Heart left ventricle (tissue), 16 donors: ENCODE measurements at regions of chr3 and their contacts with region 1.

Region 1: DNA sequence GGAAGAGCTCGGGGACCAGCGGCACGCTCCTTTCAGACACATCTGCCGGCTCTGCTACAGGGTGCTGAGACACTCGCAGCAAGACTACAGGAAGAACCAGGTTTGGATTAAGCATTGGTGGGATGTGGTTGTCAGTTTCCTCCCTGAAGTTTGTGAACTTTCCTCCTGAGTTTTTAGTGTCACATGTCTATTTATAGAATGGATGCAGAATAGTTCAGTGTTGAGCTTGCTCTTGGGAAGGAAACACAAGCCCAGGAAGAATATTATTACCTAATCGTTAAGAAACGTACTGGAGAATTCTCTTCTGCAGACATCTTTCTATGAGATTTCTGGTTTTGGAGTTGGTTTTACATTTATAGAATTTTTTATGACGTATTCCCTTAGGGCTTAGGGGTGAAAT is 172.0 kb downstream of the ITPR1 start:
- DNase-seq: no peak
- ATAC-seq: peak in 2 of 4 donors; percentile 41 to 55
- H3K4me3 ChIP-seq: no peak overlapping the region
- H3K27ac ChIP-seq: no peak overlapping the region
- H3K4me1 ChIP-seq: peaks cover 0 to 19% (median 10%) of the 10 kb centered on the region in 12 donors
- H3K27me3 ChIP-seq: no peaks in the 10 kb centered on the region
- CTCF ChIP-seq: no peak
- POLR2A ChIP-seq: no peak

Region 2: DNA sequence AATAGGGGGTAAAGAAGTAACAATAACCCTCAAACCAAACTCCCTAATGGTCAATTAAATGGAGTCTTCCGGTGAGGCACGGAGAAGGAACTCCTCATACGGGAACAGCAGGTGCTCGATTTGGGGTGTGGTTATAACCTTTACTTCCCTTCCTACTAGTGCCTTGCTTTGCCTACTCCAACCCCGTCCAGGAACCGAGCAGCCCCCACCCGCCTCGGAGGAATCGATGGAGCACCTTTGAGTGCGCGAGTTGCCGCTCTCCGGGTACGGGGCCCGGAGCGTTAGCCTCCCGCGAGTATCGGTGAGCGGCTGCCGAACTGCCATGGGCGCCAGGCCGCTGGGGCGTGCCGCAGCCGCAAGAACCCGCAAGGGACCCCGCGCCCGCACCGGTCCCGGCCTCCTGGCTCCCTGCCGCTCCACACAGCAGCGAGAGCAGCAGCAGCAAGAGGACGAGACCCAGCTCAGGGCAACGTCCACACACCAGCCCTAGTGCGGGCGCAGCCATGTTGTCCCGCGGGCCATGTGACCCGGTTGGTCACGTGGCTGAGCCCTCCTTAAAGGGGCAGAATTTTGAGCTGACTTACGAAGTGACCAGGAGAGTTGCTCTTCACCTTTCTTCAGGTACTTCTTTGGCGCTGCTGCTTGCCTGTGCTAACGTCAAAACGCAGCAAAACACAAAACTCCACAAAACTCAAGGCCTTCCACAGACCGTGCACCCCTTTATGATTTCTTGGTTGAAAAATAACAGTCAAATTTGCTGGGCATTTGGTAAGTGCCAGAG is 198.3 kb before region 1 on chr3 and contains the start of gene SUMF1:
- intact Hi-C with region 1: no loop called
- DNase-seq: peak; percentile 77 to 87 (median 81)
- ATAC-seq: peak; percentile 97 to 99 (median 99)
- H3K4me3 ChIP-seq: peak within 1 kb of the TSS; percentile 71 to 97 (median 88)
- H3K27ac ChIP-seq: peak within 1 kb of the TSS in 11 of 12 donors; percentile 53 to 90 (median 80)
- H3K4me1 ChIP-seq: peaks cover 0 to 23% (median 13%) of the 10 kb centered on the region in 12 donors
- H3K27me3 ChIP-seq: no peaks in the 10 kb centered on the region
- CTCF ChIP-seq: no peak
- POLR2A ChIP-seq: peak in 1 of 2 donors; percentile 53
- total RNA-seq, gene SUMF1: 5.8 to 21.1 (median 11.2) TPM

Region 3: GRCh38 chr3:4508048-4508981 is 156.9 kb before region 1 on chr3:
- intact Hi-C with region 1: no loop called
- DNase-seq: no peak
- ATAC-seq: no peak
- H3K4me3 ChIP-seq: no peak overlapping the region
- H3K27ac ChIP-seq: peak overlapping the region in 1 of 12 donors; percentile 39
- H3K4me1 ChIP-seq: peaks cover 0 to 64% (median 32%) of the 10 kb centered on the region in 12 donors
- H3K27me3 ChIP-seq: no peaks in the 10 kb centered on the region
- CTCF ChIP-seq: no peak
- POLR2A ChIP-seq: no peak

Region 4: DNA sequence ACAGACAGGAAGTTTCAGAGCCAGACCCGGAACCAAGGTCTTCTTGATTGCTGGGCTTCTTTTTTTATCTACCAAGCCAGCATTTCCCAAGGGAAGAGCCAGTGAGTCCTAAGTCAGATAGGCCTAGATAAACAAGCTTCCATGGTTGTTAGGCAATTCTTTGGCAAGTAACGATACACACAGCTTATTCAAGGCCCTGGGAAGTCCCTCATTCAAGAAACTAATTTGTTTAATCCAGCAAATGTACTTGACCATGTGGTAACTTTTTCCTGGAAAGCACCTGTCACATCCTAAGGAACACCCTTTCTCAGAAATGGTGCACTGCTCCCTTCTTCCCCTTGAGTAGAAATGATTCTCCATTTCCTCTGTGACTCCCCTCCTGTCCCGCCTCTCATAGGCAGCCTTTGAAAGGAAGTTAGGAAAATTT is 37.9 kb after region 1 on chr3:
- intact Hi-C with region 1: loop called in 1 of 10 experiments (anchors 5 kb)
- DNase-seq: no peak
- ATAC-seq: peak in 3 of 4 donors; percentile 76 to 84 (median 77)
- H3K4me3 ChIP-seq: no peak overlapping the region
- H3K27ac ChIP-seq: peak overlapping the region in 2 of 12 donors; percentile 16 to 29
- H3K4me1 ChIP-seq: peaks cover 0 to 19% (median 0%) of the 10 kb centered on the region in 12 donors
- H3K27me3 ChIP-seq: no peaks in the 10 kb centered on the region
- CTCF ChIP-seq: no peak
- POLR2A ChIP-seq: no peak